Prostate gland (tissue), 2 donors: ENCODE measurements at regions of chr14 and their contacts with region 1.

Region 1: DNA sequence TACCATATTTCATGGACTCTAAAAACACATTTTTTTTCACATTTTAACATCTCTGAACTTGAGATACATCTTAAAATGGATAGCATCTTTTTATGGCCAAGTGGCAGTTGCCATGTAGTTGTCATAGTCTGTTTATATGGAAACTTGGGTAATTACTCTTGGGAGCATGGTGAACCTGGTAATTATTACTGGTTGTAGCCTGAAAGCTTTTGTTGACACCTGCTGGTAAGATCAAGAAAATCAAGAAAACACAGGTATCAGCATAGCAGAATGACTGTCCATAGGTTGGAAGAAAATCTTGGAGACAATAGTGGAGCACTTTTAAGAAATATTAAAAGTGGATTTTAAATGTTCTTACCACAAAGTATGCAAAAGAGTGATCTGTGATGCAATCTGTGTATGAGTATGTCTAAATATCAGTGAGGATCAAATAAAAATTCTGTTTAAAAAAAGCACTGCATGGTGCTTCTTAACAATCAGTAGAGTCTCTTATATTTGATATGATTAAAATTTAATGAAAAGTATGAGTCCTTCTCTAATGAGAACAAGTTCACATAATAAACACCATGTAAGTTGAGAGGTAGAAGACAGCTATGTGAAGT is 44.2 kb downstream of the TTC8 start:
- DNase-seq: peak; percentile 10
- H3K4me3 ChIP-seq: no peak overlapping the region
- H3K27ac ChIP-seq: no peak overlapping the region
- H3K4me1 ChIP-seq: no peaks in the 10 kb centered on the region
- H3K27me3 ChIP-seq: no peaks in the 10 kb centered on the region
- CTCF ChIP-seq: peak; percentile 26 to 64 (median 49)
- POLR2A ChIP-seq: no peak

Region 2: GRCh38 chr14:88189417-88190191 is 679.1 kb before region 1 on chr14:
- intact Hi-C with region 1: loop called (anchors 10 kb)
- DNase-seq: peak; percentile 87
- H3K4me3 ChIP-seq: peak overlapping the region; percentile 9 to 20
- H3K27ac ChIP-seq: no peak overlapping the region
- H3K4me1 ChIP-seq: no peaks in the 10 kb centered on the region
- H3K27me3 ChIP-seq: no peaks in the 10 kb centered on the region
- CTCF ChIP-seq: peak in 3 of 4 experiments; percentile 67 to 79 (median 77)
- POLR2A ChIP-seq: no peak

Region 3: GRCh38 chr14:88667555-88668273 is 200.9 kb before region 1 on chr14:
- intact Hi-C with region 1: loop called (anchors 2 kb)
- DNase-seq: peak; percentile 67
- H3K4me3 ChIP-seq: no peak overlapping the region
- H3K27ac ChIP-seq: peak overlapping the region; percentile 22
- H3K4me1 ChIP-seq: no peaks in the 10 kb centered on the region
- H3K27me3 ChIP-seq: no peaks in the 10 kb centered on the region
- CTCF ChIP-seq: peak in 3 of 4 experiments; percentile 69 to 79 (median 72)
- POLR2A ChIP-seq: no peak

Region 4: DNA sequence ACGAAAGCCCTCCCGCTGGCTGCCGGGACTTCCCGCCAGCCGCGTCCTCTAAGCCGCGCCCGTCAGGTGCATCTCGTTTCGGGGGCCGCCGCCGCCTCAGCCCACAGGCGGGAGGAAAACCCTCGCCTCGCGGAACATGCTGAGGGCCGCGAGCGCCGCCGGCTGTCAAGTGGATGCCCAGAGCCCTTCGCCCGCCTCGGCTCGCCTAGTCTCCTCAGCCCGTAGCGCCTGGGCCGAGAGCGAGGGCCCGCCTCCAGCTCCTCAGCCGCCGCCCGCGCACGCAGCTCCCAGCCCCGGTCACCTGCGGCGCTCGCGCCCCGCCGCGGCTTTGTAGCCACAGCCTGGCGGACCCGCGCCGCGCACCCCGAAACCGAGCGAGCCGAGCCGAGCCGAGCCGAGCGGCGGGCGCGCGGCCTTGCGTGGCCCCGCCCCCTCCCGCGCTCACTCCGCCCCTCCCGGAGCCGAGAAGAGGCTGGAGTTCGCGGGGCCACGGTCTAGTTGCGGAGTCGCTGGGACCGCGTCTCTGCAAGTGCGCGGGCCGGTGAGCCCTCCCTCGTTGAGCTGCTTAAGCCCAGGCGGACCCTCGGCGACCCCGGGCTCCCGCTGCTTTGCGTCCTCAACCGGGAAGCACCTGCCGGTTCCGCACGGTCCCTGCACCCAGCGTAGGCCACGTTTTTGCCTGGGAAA is 75.9 kb before region 1 on chr14 and contains the start of gene EML5:
- intact Hi-C with region 1: loop called (anchors 5 kb)
- DNase-seq: peak; percentile 87
- H3K4me3 ChIP-seq: peak within 1 kb of the TSS; percentile 68 to 69
- H3K27ac ChIP-seq: peak within 1 kb of the TSS; percentile 76 to 81
- H3K4me1 ChIP-seq: no peaks in the 10 kb centered on the region
- H3K27me3 ChIP-seq: no peaks in the 10 kb centered on the region
- CTCF ChIP-seq: peak in 3 of 4 experiments; percentile 16 to 43 (median 25)
- POLR2A ChIP-seq: peak; percentile 53
- total RNA-seq, gene EML5: 8.3 to 17.2 TPM

Region 5: GRCh38 chr14:88824314-88825077 is 44.2 kb before region 1 on chr14 and contains the start of gene TTC8:
- intact Hi-C with region 1: no loop called
- DNase-seq: peak; percentile 85
- H3K4me3 ChIP-seq: peak within 1 kb of the TSS; percentile 67 to 68
- H3K27ac ChIP-seq: peak within 1 kb of the TSS; percentile 82 to 86
- H3K4me1 ChIP-seq: no peaks in the 10 kb centered on the region
- H3K27me3 ChIP-seq: no peaks in the 10 kb centered on the region
- CTCF ChIP-seq: peak in 1 of 4 experiments; percentile 20
- POLR2A ChIP-seq: peak; percentile 52
- total RNA-seq, gene TTC8: 34.8 to 115 TPM